Endothelial cell of umbilical vein (primary cell): ENCODE measurements at regions of chr1 and their contacts with region 1.

Region 1: DNA sequence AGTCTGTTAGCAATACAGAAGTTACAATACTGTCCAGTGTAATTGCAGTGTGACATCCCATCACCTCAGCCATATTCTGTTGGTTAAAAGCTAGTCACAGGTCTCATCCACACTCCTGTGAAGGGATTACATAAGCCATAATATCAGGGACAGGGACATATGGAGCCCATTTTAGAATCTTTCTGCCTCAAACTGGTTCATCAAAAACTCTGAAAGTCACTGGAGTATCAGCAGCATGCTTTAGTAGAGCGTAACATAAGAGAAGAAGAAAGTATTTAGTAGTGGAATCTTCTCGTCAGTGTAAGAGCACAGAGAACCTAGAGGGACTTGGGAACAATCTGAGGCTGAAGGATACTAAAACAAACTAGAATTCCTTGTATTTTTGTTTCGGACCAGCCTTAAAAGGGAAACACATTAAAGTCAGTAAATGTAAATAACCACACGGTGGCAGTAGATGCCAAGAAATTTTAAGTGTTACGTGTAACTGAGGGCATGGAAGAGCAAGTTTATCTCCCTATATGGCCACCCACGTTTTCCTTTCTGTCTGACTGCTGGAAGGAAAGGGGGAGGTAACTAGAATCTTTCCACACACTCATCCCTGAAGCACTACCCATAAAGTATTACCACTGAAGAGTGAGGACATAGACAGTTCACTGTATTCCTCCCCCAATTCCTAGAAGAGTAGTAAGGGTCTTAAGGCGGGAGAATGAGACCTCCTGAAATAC is 41.6 kb upstream of the AGL start:
- DNase-seq: peak; percentile 87
- H3K4me3 ChIP-seq: peak overlapping the region in 1 of 3 experiments; percentile 15
- H3K27ac ChIP-seq: no peak overlapping the region
- H3K4me1 ChIP-seq: peaks cover 8% of the 10 kb centered on the region
- H3K27me3 ChIP-seq: peaks cover 15 to 21% of the 10 kb centered on the region in 2 experiments
- CTCF ChIP-seq: peak; percentile 23 to 41
- POLR2A ChIP-seq: no peak

Region 2: DNA sequence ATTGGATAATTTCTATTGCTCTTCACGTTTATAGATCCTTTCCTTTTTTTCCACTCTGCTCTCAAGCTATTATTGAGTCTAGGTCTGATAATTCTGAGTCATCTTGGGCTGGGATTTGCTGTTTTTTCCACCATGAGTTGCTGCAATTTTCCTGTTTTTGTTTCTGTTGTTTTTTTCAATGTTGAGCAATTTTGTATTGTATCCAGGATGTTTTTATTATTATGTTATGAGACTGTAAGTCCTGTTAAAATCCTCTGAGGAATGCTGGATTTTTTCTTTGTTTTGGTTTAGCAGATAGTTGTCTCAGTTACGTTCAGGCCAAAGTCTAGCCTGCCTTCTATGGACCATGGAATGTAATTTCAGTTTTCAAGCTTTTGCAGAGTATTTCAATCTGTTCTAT is 148.2 kb after region 1 on chr1:
- CTCF ChIA-PET with region 1: no interaction called
- POLR2A ChIA-PET with region 1: no interaction called
- dilution Hi-C with region 1: no loop called
- intact Hi-C with region 1: loop called (anchors 2 kb)
- DNase-seq: peak; percentile 82
- H3K4me3 ChIP-seq: no peak overlapping the region
- H3K27ac ChIP-seq: peak overlapping the region; percentile 75
- H3K4me1 ChIP-seq: peaks cover 9% of the 10 kb centered on the region
- H3K27me3 ChIP-seq: no peaks in the 10 kb centered on the region
- CTCF ChIP-seq: no peak
- POLR2A ChIP-seq: no peak

Region 3: DNA sequence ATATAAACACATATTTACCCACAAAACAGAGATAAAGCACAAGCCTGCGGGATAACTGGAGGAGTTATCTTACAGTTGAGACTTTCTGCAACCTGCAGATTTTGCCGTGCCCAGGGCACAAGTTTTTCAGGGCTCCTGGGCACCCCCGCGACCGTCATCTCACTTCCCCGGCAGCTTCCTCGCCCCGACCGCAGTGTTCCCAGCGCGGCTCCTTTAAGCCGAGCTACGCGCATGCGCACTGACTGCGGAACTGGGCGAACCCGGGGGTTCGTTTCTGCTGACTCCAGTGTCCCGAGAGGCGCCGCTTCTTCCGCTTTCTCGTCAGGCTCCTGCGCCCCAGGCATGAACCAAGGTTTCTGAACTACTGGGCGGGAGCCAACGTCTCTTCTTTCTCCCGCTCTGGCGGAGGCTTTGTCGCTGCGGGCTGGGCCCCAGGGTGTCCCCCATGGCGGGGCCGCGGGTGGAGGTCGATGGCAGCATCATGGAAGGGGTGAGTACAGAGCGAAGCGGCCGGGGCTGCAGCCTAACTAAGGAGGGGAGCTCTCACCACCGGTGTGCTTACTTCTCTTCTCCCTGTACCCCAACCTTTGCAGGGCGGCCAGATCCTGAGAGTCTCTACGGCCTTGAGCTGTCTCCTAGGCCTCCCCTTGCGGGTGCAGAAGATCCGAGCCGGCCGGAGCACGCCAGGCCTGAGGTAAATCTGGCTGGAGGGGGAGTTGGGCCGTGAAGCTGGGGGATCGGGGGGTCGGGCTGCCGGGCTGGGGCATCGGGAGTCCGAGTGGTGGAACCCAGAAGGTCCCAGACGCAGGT is 457.6 kb after region 1 on chr1 and contains the start of gene RTCA:
- CTCF ChIA-PET with region 1: interaction called, 6 read pairs
- POLR2A ChIA-PET with region 1: no interaction called
- dilution Hi-C with region 1: no loop called
- intact Hi-C with region 1: loop called (anchors 1 kb)
- DNase-seq: peak; percentile 92
- H3K4me3 ChIP-seq: peak within 1 kb of the TSS; percentile 67 to 92 (median 86)
- H3K27ac ChIP-seq: peak within 1 kb of the TSS; percentile 41
- H3K4me1 ChIP-seq: peaks cover 19% of the 10 kb centered on the region
- H3K27me3 ChIP-seq: no peaks in the 10 kb centered on the region
- CTCF ChIP-seq: no peak
- POLR2A ChIP-seq: peak; percentile 90
- total RNA-seq, gene RTCA: 44.8 and 46.6 TPM in 2 replicates

Region 4: DNA sequence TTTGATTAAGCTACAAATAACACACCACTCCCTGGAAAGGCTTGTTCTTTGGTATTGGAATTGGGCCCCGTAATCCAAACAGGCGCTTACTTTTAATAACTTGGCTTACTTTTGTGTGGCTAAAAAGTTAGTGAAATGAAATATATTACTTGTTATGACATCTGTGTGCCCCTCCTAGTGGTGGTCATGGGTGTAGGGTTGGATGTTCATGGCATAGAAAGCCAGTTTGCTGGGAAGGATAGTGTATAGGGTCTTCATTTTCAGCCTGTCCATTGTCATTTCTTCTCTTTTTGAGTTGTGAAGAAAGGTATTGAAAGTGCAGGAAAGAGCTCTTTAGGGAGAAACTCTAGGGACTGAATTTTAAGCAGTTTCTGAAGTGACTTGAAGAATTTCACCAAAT is 549.7 kb after region 1 on chr1:
- CTCF ChIA-PET with region 1: no interaction called
- POLR2A ChIA-PET with region 1: no interaction called
- dilution Hi-C with region 1: no loop called
- intact Hi-C with region 1: loop called (anchors 1 kb)
- DNase-seq: peak; percentile 47
- H3K4me3 ChIP-seq: no peak overlapping the region
- H3K27ac ChIP-seq: no peak overlapping the region
- H3K4me1 ChIP-seq: peaks cover 26% of the 10 kb centered on the region
- H3K27me3 ChIP-seq: no peaks in the 10 kb centered on the region
- CTCF ChIP-seq: peak; percentile 49
- POLR2A ChIP-seq: no peak